GM12878 (cell line): ENCODE measurements at regions of chr2 and their contacts with region 1.

Region 1: GRCh38 chr2:60353406-60353800 is 200.1 kb downstream of the BCL11A start:
- DNase-seq: no peak
- ATAC-seq: peak; percentile 15
- H3K4me3 ChIP-seq: peak overlapping the region; percentile 30; the same call in 1 of the 2 replicates
- H3K27ac ChIP-seq: peak overlapping the region; percentile 99
- H3K4me1 ChIP-seq: peaks cover 75% of the 10 kb centered on the region
- H3K27me3 ChIP-seq: no peaks in the 10 kb centered on the region
- CTCF ChIP-seq: 0 out of 6 replicates have a peak, but pooled peaks of 1 of the 3 experiments have one; percentile 16
- EP300 ChIP-seq: no peak
- POLR2A ChIP-seq: peak; percentile 19; the same call in 1 of the 2 replicates
- RAD21 ChIP-seq: peak; percentile 25; the same call in 1 of the 2 replicates

Region 2: DNA sequence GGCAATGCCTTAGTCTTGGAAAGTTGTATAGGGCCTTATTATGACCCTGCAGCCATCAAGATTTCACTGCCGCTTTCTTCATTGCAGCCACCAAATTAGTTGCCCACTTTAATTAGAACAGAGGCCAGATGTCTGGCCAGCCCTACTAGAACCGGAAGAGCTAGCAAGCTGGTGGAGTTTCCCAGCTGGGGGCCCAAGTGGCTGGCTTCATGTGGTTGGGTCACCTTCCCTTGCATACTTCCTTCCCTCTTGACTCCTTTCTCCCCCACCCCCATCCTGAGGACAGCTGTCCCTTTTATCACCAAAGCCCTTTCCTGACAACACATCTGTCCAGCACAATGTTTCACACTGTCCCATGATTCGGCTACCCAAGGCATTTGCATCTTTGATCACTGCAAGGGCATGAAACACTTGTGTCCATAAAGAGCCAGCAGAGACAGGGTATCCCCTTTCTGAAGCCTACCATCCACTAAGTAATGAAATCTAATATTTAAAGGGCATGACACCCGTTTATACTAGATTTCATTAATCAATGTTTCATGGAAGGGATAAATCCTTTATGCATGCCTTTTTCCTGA is 12.8 kb after region 1 on chr2:
- CTCF ChIA-PET with region 1: interaction called, 5 read pairs
- POLR2A ChIA-PET with region 1: interaction called, 3 read pairs
- RAD21 ChIA-PET with region 1: interaction called, 8 read pairs
- SMC1A ChIA-PET with region 1: interaction called, 11 read pairs
- in situ Hi-C with region 1: no loop called
- intact Hi-C with region 1: no loop called
- DNase-seq: no peak
- ATAC-seq: peak; percentile 85
- H3K4me3 ChIP-seq: no peak overlapping the region
- H3K27ac ChIP-seq: peak overlapping the region; percentile 40
- H3K4me1 ChIP-seq: peaks cover 58% of the 10 kb centered on the region
- H3K27me3 ChIP-seq: no peaks in the 10 kb centered on the region
- CTCF ChIP-seq: no peak
- EP300 ChIP-seq: no peak
- POLR2A ChIP-seq: no peak
- RAD21 ChIP-seq: no peak

Region 3: DNA sequence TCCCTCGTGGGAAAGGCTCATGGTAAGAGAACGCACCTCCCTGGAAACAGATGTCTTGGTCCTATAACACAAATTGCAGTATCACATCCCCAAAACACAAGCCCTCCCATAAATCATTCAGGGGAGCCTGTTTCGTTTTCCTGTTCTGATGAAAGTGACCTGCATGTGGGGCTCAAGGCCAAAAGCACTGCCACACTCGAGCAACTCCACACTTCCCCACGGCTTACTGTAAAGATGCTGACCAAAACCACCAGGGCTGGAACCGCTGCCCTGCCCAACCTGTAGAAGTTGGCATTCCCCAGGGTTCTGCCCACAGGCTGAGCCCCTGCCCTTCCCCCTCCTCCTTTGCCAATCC is 60.4 kb after region 1 on chr2:
- CTCF ChIA-PET with region 1: no interaction called
- POLR2A ChIA-PET with region 1: no interaction called
- RAD21 ChIA-PET with region 1: no interaction called
- SMC1A ChIA-PET with region 1: no interaction called
- in situ Hi-C with region 1: no loop called
- intact Hi-C with region 1: loop called (anchors 5 kb)
- DNase-seq: peak; percentile 78
- ATAC-seq: peak; percentile 91
- H3K4me3 ChIP-seq: no peak overlapping the region
- H3K27ac ChIP-seq: peak overlapping the region; percentile 61
- H3K4me1 ChIP-seq: peaks cover 41% of the 10 kb centered on the region
- H3K27me3 ChIP-seq: no peaks in the 10 kb centered on the region
- CTCF ChIP-seq: no peak
- EP300 ChIP-seq: no peak
- POLR2A ChIP-seq: no peak
- RAD21 ChIP-seq: no peak

Region 4: DNA sequence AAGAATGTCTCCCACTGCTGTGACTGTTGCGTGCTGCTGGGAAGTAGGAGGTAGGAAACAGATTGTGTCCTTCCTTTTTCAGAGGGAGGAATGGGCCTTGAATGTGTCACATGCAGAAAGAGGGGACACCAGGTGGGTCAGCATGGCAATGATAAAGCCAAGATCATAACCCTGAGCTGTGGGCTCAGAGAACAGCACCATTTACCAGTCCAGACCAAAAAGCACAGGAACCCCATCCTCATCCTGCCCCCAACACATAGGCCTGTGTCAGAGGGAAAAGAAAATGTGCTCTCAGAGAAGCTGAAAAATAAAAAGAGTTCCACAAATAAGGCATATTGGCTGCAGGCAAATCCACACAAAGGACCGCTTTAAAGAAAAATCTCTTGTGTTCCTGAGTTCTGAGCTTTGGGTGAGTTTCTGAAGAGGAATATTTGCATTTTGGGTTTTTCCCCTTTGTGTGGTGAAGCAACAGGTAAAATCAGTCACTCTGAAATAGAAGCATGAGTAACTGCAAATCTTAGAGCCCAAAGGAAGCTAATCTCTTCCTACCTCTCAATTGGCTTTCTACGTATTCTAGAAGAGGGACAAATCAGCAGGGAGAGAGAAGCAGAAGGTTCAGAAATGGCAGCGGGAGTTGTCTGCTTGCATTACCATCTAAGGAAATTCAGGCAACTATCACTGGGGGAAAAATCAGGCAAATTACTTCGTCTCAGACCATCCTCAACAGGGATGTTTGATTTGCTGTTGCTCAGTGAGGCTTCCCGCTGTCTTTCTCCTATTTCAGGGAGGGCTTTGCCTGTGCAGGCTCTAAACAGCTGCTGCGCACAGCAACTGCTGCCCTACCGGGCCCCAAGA is 93.2 kb after region 1 on chr2:
- CTCF ChIA-PET with region 1: interaction called, 5 read pairs
- POLR2A ChIA-PET with region 1: no interaction called
- RAD21 ChIA-PET with region 1: interaction called, 11 read pairs
- SMC1A ChIA-PET with region 1: interaction called, 9 read pairs
- in situ Hi-C with region 1: no loop called
- intact Hi-C with region 1: no loop called
- DNase-seq: peak; percentile 86
- ATAC-seq: peak; percentile 91
- H3K4me3 ChIP-seq: peak overlapping the region; percentile 21; the same call in 1 of the 2 replicates
- H3K27ac ChIP-seq: peak overlapping the region; percentile 94
- H3K4me1 ChIP-seq: peaks cover 54% of the 10 kb centered on the region
- H3K27me3 ChIP-seq: no peaks in the 10 kb centered on the region
- CTCF ChIP-seq: no peak
- EP300 ChIP-seq: peak in 1 of 2 experiments; percentile 38; a peak in 1 of 4 replicates
- POLR2A ChIP-seq: 0 out of 2 replicates have a peak, but pooled peaks have one; percentile 17
- RAD21 ChIP-seq: no peak

Region 5: GRCh38 chr2:60794277-60794863 is 441.0 kb after region 1 on chr2:
- CTCF ChIA-PET with region 1: no interaction called
- POLR2A ChIA-PET with region 1: no interaction called
- RAD21 ChIA-PET with region 1: no interaction called
- SMC1A ChIA-PET with region 1: no interaction called
- in situ Hi-C with region 1: no loop called
- intact Hi-C with region 1: no loop called
- DNase-seq: no peak
- ATAC-seq: peak; percentile 51; the same call in 2 of the 3 replicates
- H3K4me3 ChIP-seq: no peak overlapping the region
- H3K27ac ChIP-seq: no peak overlapping the region
- H3K4me1 ChIP-seq: peaks cover 16% of the 10 kb centered on the region
- H3K27me3 ChIP-seq: no peaks in the 10 kb centered on the region
- CTCF ChIP-seq: peak; percentile 33 to 73 (median 55); a peak in 4 of 6 replicates
- EP300 ChIP-seq: no peak
- POLR2A ChIP-seq: no peak
- RAD21 ChIP-seq: peak; percentile 81